Activated T-helper 2 cell treated with anti-CD3 and anti-CD28 coated beads, Interferon-gamma antibody, Interleukin-2, Interleukin-4, amounts not matched to agents 10 μg/mL and 5 μg/mL and 100 μg/mL, durations not matched to agents 14 hours and 24 hours and 36 hours (primary cell): ENCODE measurements at regions of chr7 and their contacts with region 1.

Region 1: GRCh38 chr7:14924398-14924797 is 21.8 kb upstream of the DGKB start:
- DNase-seq: no peak
- H3K4me3 Mint-ChIP-seq: no peak overlapping the region
- H3K27ac Mint-ChIP-seq: no peak overlapping the region
- H3K4me1 Mint-ChIP-seq: no peaks in the 10 kb centered on the region
- H3K27me3 Mint-ChIP-seq: no peaks in the 10 kb centered on the region

Region 2: GRCh38 chr7:14938181-14938580 is 13.8 kb after region 1 on chr7:
- intact Hi-C with region 1: loop called (anchors 1 kb)
- DNase-seq: no peak
- H3K4me3 Mint-ChIP-seq: no peak overlapping the region
- H3K27ac Mint-ChIP-seq: no peak overlapping the region
- H3K4me1 Mint-ChIP-seq: no peaks in the 10 kb centered on the region
- H3K27me3 Mint-ChIP-seq: no peaks in the 10 kb centered on the region